A549 (cell line): ENCODE measurements at regions of chr2 and their contacts with region 1.

Region 1: DNA sequence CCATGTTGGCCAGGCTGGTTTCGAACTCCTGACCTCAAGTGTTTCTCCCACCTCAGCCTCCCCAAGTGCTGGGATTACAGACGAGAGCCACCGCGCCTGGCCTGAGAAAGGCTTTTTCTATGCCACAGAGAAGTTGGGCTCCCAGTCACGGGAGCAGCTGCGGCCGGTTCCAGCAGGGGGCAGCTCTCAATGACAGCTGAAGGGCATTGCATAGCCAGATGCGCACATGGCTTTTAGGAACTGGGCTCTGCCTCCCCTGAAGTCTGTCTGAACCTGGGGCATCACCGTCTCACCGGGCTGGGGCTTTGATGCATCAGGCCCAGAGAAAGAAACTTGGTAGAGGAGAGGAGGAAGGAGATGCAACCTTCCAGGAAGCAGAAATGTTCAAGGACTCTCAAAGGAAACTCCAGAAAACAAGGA is 84.2 kb upstream of the LAPTM4A start:
- DNase-seq: peak; percentile 71 to 75
- ATAC-seq: peak; percentile 81 to 90
- H3K4me3 ChIP-seq: no peak overlapping the region
- H3K27ac ChIP-seq: peak overlapping the region; percentile 10 to 61; a peak in 5 of 6 replicates
- H3K4me1 ChIP-seq: peaks cover 26% of the 10 kb centered on the region
- CTCF ChIP-seq: peak; percentile 89
- EP300 ChIP-seq: no peak
- POLR2A ChIP-seq: no peak
- RAD21 ChIP-seq: peak; percentile 91 to 92

Region 2: DNA sequence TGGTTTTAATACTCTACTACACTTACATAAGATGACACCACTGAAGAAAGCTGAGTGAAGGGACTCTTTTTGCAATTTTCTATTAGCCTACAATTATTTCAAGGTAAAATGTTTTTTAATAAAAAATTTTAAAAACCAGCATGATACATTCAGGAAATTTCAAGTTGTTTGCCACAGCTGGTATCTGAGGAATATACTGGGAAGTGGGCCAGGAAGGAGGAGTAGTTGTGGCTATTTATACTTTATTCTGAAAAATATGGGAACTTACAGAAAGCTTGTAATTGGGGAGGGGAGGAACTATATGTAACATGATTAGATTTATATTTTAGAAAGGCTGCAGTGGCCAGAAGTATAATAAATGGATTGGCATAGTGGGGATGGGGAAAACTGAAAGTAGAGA is 186.6 kb before region 1 on chr2:
- CTCF ChIA-PET with region 1: no interaction called
- POLR2A ChIA-PET with region 1: no interaction called
- DNase-seq: no peak
- ATAC-seq: no peak
- H3K4me3 ChIP-seq: no peak overlapping the region
- H3K27ac ChIP-seq: no peak overlapping the region
- H3K4me1 ChIP-seq: peaks cover 11% of the 10 kb centered on the region
- CTCF ChIP-seq: no peak
- EP300 ChIP-seq: no peak
- POLR2A ChIP-seq: no peak
- RAD21 ChIP-seq: no peak

Region 3: DNA sequence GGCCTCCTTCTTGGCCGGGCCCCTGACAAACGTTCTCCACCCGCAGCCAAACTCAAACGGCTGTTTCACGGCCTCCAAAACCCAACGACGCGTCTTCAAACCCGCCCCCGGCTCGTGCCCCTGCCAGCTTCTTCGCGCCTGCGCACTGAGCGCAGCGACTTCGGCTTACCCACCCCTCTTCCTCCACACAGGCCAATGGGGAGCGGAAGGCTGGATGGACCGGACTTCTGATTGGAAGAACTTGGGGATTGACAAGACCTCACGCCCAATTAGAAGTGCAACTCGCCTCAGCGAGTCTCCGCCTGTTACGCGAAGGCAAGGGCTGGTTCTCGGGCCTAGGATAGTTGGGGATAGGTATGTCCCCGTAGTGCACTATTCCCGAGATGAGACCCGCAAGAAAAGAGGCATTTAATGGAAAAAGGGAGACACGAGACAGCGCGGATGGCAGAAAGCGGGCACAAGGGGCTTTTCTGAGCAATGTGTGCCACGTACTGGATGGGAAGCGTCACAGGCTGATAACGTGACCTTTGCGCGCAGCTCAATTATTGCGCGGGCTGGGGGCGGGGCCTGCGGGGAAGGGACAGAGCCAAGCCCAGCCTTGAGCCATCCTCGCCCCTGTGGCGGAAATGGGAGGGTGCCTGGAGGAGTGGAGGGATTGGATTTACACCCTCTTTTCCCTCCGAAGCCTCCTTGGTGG is 84.0 kb before region 1 on chr2 and contains the start of gene LAPTM4A:
- CTCF ChIA-PET with region 1: no interaction called
- POLR2A ChIA-PET with region 1: no interaction called
- DNase-seq: peak; percentile 99 to 100
- ATAC-seq: peak; percentile 95 to 97
- H3K4me3 ChIP-seq: peak within 1 kb of the TSS; percentile 63
- H3K27ac ChIP-seq: peak within 1 kb of the TSS; percentile 92 to 96
- H3K4me1 ChIP-seq: peaks cover 31% of the 10 kb centered on the region
- CTCF ChIP-seq: no peak
- EP300 ChIP-seq: no peak
- POLR2A ChIP-seq: peak; percentile 67
- RAD21 ChIP-seq: no peak
- polyA plus RNA-seq, gene LAPTM4A: 509 and 655 TPM in 2 replicates

Region 4: DNA sequence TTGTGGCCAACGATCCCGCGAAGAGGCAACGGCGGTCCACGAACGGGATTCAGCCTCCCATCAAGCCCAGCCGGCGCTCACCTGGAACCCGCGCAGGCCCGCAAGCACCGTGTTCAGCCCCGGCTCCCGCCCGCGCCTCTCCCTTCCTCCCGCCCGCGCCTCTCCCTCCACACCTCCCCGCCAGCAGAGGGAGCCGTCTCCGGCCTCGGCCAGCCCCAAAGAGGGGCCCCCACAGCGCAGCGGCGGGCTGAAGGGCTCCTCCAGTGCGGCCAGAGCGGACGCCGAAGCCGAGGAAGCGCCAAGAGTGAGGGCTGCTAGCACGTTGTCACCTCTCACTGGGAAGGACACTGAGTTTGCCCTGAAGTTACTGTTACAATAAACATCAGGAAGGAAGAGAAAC is 28.9 kb before region 1 on chr2:
- CTCF ChIA-PET with region 1: interaction called, 49 read pairs
- POLR2A ChIA-PET with region 1: no interaction called
- DNase-seq: no peak
- ATAC-seq: no peak
- H3K4me3 ChIP-seq: no peak overlapping the region
- H3K27ac ChIP-seq: no peak overlapping the region
- H3K4me1 ChIP-seq: peaks cover 32% of the 10 kb centered on the region
- CTCF ChIP-seq: peak; percentile 12; the same call in 1 of the 3 replicates
- EP300 ChIP-seq: no peak
- POLR2A ChIP-seq: no peak
- RAD21 ChIP-seq: no peak

Region 5: DNA sequence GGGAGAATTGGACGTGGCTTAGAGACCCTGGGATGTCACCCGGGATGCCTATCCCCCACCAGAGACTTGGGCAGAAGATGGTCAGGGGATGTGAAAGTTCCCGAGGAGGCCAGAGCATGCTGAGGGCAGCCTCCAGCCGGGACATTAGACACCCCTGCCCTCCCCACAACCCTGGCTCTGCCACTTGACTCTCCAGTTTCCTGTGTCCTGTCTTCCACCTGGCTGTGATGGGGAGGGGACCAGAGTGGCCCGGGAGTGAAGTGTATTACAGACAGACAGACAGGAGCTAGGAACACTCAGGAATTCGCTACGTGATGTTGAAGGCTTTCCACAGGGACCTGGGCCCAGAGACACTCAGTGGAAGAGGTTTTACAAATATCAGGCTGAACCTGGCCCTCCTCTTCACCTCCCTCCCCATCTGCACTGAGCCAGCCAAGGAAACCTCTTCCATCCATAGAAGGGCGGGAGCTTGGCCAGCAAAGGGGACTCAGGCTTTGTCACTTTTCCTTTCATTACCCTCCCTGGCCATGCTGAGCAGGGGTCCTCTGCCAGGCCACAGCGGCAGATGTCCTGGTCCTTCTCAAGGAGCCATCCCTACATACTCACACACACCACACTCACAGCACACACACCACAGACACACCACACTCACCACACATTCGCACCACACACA is 28.6 kb after region 1 on chr2:
- CTCF ChIA-PET with region 1: interaction called, 21 read pairs
- POLR2A ChIA-PET with region 1: no interaction called
- DNase-seq: peak; percentile 58 to 64
- ATAC-seq: peak; percentile 57 to 66
- H3K4me3 ChIP-seq: no peak overlapping the region
- H3K27ac ChIP-seq: peak overlapping the region; percentile 0 to 81; a peak in 4 of 6 replicates
- H3K4me1 ChIP-seq: peaks cover 29% of the 10 kb centered on the region
- CTCF ChIP-seq: no peak
- EP300 ChIP-seq: no peak
- POLR2A ChIP-seq: no peak
- RAD21 ChIP-seq: no peak

Region 6: DNA sequence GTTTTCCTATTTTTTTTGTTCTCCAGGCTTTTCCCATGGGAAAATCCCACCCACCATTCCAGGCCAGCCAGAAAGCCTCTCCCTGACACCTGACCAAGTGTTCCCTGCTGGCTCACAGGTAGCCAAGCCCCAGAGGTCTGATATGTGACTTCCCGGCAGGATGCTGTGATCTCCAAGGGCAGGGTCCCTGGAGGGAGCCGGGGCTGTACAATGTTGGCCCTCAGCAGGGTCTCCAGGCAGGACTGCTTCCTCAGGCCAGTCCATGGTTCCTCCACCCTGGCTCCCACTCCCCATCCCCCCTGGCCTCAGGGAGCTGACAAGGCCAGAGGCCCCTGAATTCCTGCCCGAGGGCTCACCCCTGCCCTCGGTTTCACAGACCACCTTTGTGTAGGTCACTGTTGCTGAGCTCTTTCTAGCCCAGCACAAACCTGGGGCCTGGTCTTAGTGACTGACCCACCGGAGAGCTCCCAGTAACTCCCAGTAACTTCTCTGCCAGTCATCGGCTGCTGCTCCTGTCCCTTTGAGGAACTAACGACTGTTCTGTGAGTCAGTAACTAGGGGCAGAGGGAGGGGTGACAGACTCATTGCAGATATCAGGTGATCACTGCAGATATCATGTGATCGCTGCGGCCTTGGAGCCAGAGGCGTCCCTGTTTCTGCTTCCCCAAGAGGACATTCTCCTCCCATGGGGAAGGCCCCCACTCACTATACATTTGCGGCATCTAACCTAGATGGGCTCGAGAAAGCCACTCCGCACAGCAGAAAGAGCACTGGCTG is 50.6 kb after region 1 on chr2:
- CTCF ChIA-PET with region 1: interaction called, 115 read pairs
- POLR2A ChIA-PET with region 1: no interaction called
- DNase-seq: peak; percentile 42 to 64
- ATAC-seq: no peak
- H3K4me3 ChIP-seq: no peak overlapping the region
- H3K27ac ChIP-seq: peak overlapping the region; percentile 90 to 98
- H3K4me1 ChIP-seq: peaks cover 65% of the 10 kb centered on the region
- CTCF ChIP-seq: no peak
- EP300 ChIP-seq: no peak
- POLR2A ChIP-seq: no peak
- RAD21 ChIP-seq: no peak

Region 7: DNA sequence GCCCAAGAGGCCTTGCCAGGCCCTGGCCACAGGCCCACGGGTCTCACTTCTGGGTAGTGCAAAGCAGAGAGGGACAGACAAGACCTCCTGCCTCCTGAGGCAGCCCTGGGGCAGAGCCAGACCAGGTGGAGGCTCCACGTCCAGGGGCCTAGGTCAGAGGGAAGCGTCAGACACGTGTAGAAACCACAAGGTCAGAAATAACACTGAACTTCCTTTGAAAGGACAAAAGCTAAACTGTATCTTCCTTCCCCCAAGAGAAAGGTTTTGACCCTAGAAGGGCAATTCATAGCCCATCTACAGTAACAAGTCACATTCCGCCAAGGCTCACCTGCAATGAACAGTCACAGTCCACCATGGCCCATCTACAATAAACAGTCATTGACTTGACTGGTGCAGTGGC is 71.4 kb after region 1 on chr2:
- CTCF ChIA-PET with region 1: interaction called, 12 read pairs
- POLR2A ChIA-PET with region 1: no interaction called
- DNase-seq: no peak
- ATAC-seq: no peak
- H3K4me3 ChIP-seq: no peak overlapping the region
- H3K27ac ChIP-seq: peak overlapping the region; percentile 51 to 66; a peak in 2 of 6 replicates
- H3K4me1 ChIP-seq: peaks cover 33% of the 10 kb centered on the region
- CTCF ChIP-seq: no peak
- EP300 ChIP-seq: no peak
- POLR2A ChIP-seq: no peak
- RAD21 ChIP-seq: no peak

Region 8: GRCh38 chr2:20231632-20232031 is 96.0 kb after region 1 on chr2:
- CTCF ChIA-PET with region 1: interaction called, 202 read pairs
- POLR2A ChIA-PET with region 1: no interaction called
- DNase-seq: peak; percentile 65 to 87
- ATAC-seq: peak; percentile 86 to 88
- H3K4me3 ChIP-seq: no peak overlapping the region
- H3K27ac ChIP-seq: peak overlapping the region; percentile 46 to 76
- H3K4me1 ChIP-seq: peaks cover 16% of the 10 kb centered on the region
- CTCF ChIP-seq: peak; percentile 10; the same call in 1 of the 3 replicates
- EP300 ChIP-seq: no peak
- POLR2A ChIP-seq: no peak
- RAD21 ChIP-seq: 0 out of 5 replicates have a peak, but pooled peaks of 1 of the 2 experiments have one; percentile 16